ENCODE measurements at regions of chr18 and their contacts with region 1.

Region 1: DNA sequence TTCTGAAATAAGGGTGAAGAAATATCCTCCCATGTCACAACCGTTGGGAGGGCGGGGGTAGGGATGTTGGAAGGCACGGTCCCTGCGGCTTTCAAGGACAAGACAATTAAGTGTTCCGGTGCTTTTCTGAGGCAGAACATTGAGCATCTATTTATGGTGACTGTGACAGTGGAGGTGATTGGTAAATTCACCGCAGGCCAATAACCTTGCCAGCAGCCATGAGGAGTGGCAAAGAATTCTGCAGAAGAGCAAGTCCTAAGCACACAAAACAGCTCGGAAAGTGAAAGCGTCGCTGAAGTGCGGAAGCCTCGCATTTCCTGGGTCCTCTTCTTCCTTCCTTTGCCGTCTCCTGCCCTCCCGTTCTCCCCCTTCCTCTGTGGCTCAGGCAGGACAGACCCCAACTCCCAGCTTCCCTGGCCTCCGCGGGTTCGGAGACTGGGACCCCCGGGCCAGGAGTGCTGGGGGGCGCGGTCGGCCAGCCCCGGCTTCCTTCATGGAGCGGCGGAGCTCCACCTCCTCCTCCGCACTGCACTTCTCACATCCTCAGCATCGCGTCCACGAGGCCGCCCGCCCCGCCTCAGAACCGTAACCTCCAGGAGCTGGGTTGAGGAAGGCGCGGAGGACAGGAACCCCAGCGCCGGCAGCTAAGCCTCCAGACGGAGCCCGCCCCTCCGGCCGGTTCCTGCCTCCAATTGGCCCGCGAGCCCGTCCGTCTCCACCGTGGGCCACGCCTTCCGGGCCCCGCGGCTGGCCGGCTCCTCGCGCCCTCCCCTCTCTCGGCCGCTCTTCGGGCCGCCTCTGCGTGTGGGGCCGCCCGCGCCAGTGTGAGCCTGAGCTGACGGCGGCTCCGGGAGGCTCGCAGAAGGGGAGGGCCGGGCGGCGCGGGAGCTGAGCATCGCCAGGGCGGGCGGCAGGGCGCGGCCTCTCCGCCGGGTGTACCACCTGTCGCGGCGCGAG is at the start of gene ME2:
- DNase-seq: peak; percentile 90
- H3K4me3 Mint-ChIP-seq: peak within 1 kb of the TSS; percentile 98
- H3K27ac Mint-ChIP-seq: peak within 1 kb of the TSS; percentile 99
- H3K4me1 Mint-ChIP-seq: peaks cover 27% of the 10 kb centered on the region
- H3K27me3 Mint-ChIP-seq: peaks cover 3% of the 10 kb centered on the region
- total RNA-seq, gene ME2: 137 to 146 TPM

Region 2: DNA sequence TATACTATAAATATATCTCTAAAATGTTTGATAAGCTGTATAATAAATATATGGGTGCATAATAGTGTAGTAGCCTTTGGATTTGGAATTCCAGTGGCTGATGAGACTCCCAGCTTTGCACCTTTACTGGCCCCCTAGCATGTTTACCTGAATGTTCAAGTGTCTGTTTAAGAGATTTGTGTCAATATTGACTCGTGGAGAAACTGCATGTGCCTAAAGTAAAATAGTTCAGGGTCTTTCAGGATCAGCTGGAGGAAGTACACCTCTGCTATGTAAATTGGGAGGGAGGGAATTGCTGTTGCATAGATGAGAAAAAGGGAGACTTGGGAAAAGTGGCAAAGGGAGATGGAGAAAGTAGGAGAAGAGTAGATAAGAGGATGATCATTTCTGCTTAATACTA is 24.2 kb after region 1 on chr18:
- CTCF ChIA-PET with region 1: interaction called, 3 read pairs
- intact Hi-C with region 1: loop called (anchors 1 kb)
- DNase-seq: no peak
- H3K4me3 Mint-ChIP-seq: no peak overlapping the region
- H3K27ac Mint-ChIP-seq: no peak overlapping the region
- H3K4me1 Mint-ChIP-seq: peaks cover 35% of the 10 kb centered on the region
- H3K27me3 Mint-ChIP-seq: no peaks in the 10 kb centered on the region

Region 3: GRCh38 chr18:50967714-50968661 is 89.4 kb after region 1 on chr18 and contains the start of gene ELAC1:
- CTCF ChIA-PET with region 1: interaction called, 4 read pairs
- intact Hi-C with region 1: loop called (anchors 1 kb)
- DNase-seq: peak; percentile 63
- H3K4me3 Mint-ChIP-seq: peak within 1 kb of the TSS; percentile 94
- H3K27ac Mint-ChIP-seq: peak within 1 kb of the TSS; percentile 91
- H3K4me1 Mint-ChIP-seq: peaks cover 23% of the 10 kb centered on the region
- H3K27me3 Mint-ChIP-seq: no peaks in the 10 kb centered on the region
- total RNA-seq, gene ELAC1: 2.7 to 4.0 TPM